ENCODE measurements at regions of chr5 and their contacts with region 1.

Region 1: DNA sequence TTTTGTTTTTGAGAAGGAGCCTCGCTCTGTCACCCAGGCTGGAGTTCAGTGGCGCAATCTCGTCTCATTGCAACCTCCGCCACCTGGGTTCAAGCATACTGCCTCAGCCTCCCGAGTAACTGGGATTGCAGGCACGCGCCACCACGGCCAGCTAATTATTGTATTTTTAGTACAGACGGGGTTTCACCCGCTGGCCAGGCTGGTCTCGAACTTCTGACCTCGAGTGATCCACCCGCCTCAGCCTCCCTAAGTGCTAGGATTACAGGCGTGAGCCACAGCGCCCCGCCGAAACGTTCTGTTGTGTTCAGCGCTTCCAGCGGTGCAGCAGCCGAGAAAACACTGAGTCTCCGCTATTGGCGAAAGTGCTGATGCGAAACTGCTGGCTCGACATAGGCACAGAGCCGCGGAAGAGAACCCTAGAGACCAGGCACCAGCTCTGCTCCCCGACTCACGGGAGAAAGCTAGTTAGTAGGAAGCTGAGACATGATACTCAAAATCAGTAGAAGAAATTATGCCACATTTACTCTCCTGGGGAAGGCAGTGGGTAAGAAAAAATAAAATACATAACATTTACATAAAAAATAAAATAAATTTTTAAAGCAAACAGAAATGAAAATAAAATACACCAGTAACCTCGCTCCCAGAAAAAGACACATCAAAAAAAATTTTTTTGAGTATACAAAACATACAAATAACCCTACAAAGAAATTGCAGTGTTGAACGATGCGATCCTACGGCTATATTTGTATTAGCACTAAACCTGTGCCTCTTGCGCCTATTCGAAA is 31.6 kb downstream of the ANXA2R start:
- DNase-seq: peak; percentile 72 to 85
- ATAC-seq: peak; percentile 79 to 81
- H3K4me3 ChIP-seq: peak overlapping the region; percentile 49 to 70 (median 68)
- H3K27ac ChIP-seq: peak overlapping the region; percentile 71 to 91 (median 87)
- H3K4me1 ChIP-seq: peaks cover 0 to 8% of the 10 kb centered on the region in 2 donors
- H3K27me3 ChIP-seq: peaks cover 0 to 33% (median 6%) of the 10 kb centered on the region in 3 donors
- CTCF ChIP-seq: peak in 1 of 5 experiments; percentile 8
- POLR2A ChIP-seq: peak; percentile 64 to 74

Region 2: DNA sequence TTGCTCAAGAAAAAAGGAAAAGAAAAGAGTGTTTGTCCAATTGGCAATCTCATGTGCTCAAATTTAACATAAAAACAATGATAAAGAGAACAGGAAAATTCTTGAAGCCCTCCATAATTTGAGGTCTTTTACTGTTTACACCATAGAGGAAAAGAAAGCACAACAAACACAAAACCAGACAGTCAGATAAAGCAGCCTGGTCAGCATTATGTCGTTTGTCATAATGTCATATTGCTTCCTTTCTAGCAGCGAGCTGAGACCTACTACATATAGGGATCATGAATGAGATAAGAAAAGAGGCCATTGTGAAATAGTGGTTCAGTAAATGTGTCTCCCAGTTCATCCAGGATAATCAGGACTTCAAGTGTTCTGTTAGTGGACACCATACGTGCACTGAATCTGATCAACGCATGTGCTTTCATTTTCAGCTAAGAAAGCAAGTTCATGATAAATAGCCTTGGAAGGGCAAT is 132.2 kb before region 1 on chr5:
- in situ Hi-C with region 1: no loop called
- intact Hi-C with region 1: no loop called
- DNase-seq: no peak
- ATAC-seq: no peak
- H3K4me3 ChIP-seq: no peak overlapping the region
- H3K27ac ChIP-seq: no peak overlapping the region
- H3K4me1 ChIP-seq: no peaks in the 10 kb centered on the region
- H3K27me3 ChIP-seq: no peaks in the 10 kb centered on the region
- CTCF ChIP-seq: no peak
- POLR2A ChIP-seq: no peak

Region 3: GRCh38 chr5:43019614-43020293 is 11.2 kb after region 1 on chr5:
- in situ Hi-C with region 1: no loop called
- intact Hi-C with region 1: loop called (anchors 1 kb)
- DNase-seq: peak; percentile 53 to 74
- ATAC-seq: peak; percentile 62 to 67
- H3K4me3 ChIP-seq: peak overlapping the region; percentile 68 to 90 (median 80)
- H3K27ac ChIP-seq: peak overlapping the region; percentile 95 to 100 (median 96)
- H3K4me1 ChIP-seq: peaks cover 6 to 19% of the 10 kb centered on the region in 2 donors
- H3K27me3 ChIP-seq: peaks cover 0 to 9% (median 0%) of the 10 kb centered on the region in 3 donors
- CTCF ChIP-seq: peak in 4 of 5 experiments; percentile 28 to 65 (median 51)
- POLR2A ChIP-seq: no peak

Region 4: GRCh38 chr5:43917925-43918324 is 909.4 kb after region 1 on chr5:
- in situ Hi-C with region 1: no loop called
- intact Hi-C with region 1: no loop called
- DNase-seq: no peak
- ATAC-seq: no peak
- H3K4me3 ChIP-seq: no peak overlapping the region
- H3K27ac ChIP-seq: no peak overlapping the region
- H3K4me1 ChIP-seq: no peaks in the 10 kb centered on the region
- H3K27me3 ChIP-seq: no peaks in the 10 kb centered on the region
- CTCF ChIP-seq: no peak
- POLR2A ChIP-seq: no peak

Measured in gastrocnemius medialis (tissue), 4 donors.